Mammary epithelial cell (primary cell): ENCODE measurements at regions of chr16 and their contacts with region 1.

Region 1: GRCh38 chr16:67216612-67217490 is 10.1 kb upstream of the TMEM208 start:
- DNase-seq: no peak
- H3K4me3 ChIP-seq: no peak overlapping the region
- H3K27ac ChIP-seq: no peak overlapping the region
- H3K4me1 ChIP-seq: peaks cover 16% of the 10 kb centered on the region
- H3K27me3 ChIP-seq: no peaks in the 10 kb centered on the region
- CTCF ChIP-seq: no peak

Region 2: DNA sequence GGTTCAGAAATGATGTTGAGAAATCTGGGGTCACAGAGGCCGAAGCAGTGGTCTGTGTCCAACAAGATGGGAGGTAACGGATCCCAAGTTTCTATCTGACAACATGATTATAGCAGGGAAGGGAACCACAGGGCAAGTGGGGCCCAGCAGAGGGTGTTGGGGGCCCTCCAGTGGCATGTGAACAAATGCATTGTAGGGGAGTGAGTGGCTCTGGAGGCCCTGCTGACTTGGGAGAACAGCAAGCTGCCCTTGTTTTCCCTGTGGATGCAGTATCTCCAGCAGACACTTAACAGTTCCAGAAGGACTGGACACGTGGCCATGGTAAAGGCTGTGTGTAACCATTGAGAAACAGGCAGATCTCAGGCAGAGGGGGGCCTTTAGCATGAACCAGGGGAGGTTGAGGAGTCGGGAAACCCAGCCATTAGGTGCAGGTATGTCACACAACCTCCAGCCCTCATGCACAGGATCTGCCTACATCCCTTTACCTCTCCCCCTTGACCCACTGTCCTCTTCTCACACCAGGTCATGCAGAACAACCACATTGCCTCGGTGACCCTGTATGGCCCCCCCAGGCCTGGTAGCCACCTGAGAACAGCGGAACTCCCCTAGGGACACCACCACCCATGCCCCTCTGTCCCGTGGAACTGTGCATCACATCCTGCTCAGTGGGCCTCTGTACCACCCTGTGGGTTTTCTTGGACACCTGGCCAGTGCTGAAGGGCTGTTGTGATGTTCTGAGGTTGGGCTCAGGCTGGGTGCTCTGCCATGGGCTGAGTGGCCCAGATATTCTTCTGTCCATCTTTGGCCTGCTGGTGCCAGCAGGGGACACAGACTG is 70.1 kb before region 1 on chr16:
- CTCF ChIA-PET with region 1: no interaction called
- dilution Hi-C with region 1: loop called (anchors 5 kb)
- in situ Hi-C with region 1: no loop called
- intact Hi-C with region 1: no loop called
- DNase-seq: no peak
- H3K4me3 ChIP-seq: no peak overlapping the region
- H3K27ac ChIP-seq: no peak overlapping the region
- H3K4me1 ChIP-seq: peaks cover 30% of the 10 kb centered on the region
- H3K27me3 ChIP-seq: no peaks in the 10 kb centered on the region
- CTCF ChIP-seq: no peak

Region 3: GRCh38 chr16:67423611-67424305 is 206.9 kb after region 1 on chr16:
- CTCF ChIA-PET with region 1: no interaction called
- dilution Hi-C with region 1: no loop called
- in situ Hi-C with region 1: no loop called
- intact Hi-C with region 1: no loop called
- DNase-seq: no peak
- H3K4me3 ChIP-seq: no peak overlapping the region
- H3K27ac ChIP-seq: no peak overlapping the region
- H3K4me1 ChIP-seq: no peaks in the 10 kb centered on the region
- H3K27me3 ChIP-seq: peaks cover 2% of the 10 kb centered on the region
- CTCF ChIP-seq: no peak